Head of caudate nucleus (tissue), 42 donors: ENCODE measurements at regions of chr10 and their contacts with region 1.

Region 1: DNA sequence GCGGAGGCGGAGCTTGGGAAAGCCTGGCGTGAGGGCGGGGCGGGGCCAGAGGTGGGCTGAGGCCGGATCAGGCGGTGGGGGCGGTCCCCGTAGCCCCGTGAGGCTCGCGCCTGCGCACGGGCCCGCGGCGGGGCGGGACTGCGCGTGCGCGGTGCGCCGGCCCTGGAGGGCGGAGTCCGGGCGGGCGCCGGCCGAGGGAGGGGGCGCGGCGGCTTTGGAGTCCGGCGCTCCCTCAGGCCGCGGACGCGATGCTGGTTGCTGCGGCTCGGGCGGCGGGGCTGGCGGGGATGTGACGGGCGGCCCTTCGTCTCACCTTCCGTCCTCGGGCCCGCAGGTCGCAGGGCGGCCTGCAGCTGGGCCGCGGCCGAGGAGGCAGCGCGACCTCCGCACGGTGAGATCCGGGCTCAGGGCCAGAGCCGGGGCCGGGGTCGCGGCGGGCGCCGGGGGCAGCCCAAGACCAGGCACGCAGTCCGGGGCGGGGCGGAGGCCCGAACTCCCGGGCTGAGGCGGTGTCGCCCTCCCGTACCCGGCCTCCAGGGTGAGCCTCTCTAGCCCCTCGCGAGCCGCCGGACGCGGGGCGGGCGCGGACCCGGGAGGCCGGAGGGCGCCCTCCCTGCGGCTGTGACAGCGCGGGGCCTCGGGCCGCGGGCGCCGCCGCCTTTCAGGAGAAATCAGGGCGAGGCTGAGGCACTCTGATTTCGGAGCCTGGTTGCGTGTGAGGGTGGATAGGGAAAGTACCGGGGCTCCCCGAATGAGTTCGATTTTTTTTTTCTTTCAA is at the start of gene CCSER2:
- DNase-seq: peak; percentile 91 to 98 (median 96)

Region 2: GRCh38 chr10:84264611-84265141 is 63.9 kb before region 1 on chr10:
- intact Hi-C with region 1: loop called (anchors 2 kb)
- DNase-seq: peak; percentile 62 to 93 (median 84)

Region 3: DNA sequence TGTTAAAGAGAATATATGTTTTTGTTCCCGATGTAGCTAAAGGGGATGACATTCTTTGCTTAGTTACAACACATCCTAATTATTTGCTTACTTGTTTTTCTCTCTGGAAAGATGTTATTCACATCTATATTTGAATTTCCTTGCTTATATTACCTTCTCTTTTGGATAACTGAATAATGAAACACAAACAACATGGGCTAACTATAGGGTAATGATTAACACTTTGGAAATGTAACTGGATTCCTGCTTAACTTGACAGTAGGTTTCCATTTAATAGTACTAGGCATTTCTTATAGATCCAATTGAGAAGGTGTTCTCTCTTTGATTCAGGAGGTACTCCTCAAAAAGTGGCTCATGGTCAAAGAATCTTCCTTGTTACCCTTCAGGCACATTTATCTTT is 140.9 kb after region 1 on chr10:
- intact Hi-C with region 1: no loop called
- DNase-seq: no peak